Transverse colon (tissue), 4 donors: ENCODE measurements at regions of chr18 and their contacts with region 1.

Region 1: GRCh38 chr18:8333961-8334360 is 275.3 kb upstream of the RAB12 start:
- DNase-seq: no peak
- H3K4me3 ChIP-seq: no peak overlapping the region
- H3K27ac ChIP-seq: no peak overlapping the region
- H3K4me1 ChIP-seq: peaks cover 0 to 6% (median 3%) of the 10 kb centered on the region in 4 donors
- H3K27me3 ChIP-seq: no peaks in the 10 kb centered on the region
- CTCF ChIP-seq: no peak
- EP300 ChIP-seq: no peak
- POLR2A ChIP-seq: no peak

Region 2: DNA sequence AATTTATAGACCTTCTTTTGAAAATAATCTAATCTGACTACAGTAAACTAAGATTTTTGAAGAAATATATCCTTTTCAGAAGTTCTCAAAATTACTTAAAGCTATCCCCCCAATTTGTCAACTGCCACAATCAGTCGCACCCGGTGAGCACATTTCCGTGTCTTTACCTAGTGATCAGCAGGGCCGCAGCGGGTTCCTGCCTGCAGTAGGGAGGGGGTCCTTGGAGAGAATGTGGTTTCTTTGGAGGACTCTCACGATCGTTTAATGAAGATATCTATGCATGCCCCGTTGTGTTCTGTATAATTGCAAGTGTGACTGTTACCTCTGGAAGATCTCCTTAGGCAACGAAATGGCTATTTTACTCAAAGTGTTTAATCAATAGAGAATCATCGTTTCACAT is 23.4 kb after region 1 on chr18:
- in situ Hi-C with region 1: no loop called
- intact Hi-C with region 1: loop called (anchors 1 kb)
- DNase-seq: no peak
- H3K4me3 ChIP-seq: no peak overlapping the region
- H3K27ac ChIP-seq: no peak overlapping the region
- H3K4me1 ChIP-seq: no peaks in the 10 kb centered on the region
- H3K27me3 ChIP-seq: no peaks in the 10 kb centered on the region
- CTCF ChIP-seq: no peak
- EP300 ChIP-seq: no peak
- POLR2A ChIP-seq: no peak